ENCODE measurements at regions of chr2 and their contacts with region 1.

Region 1: GRCh38 chr2:181312515-181312927 is 144.7 kb upstream of the ITGA4 start:
- DNase-seq: peak; percentile 99
- ATAC-seq: peak; percentile 87
- H3K4me3 ChIP-seq: 0 out of 2 replicates have a peak overlapping the region, but pooled peaks have one; percentile 6
- H3K27ac ChIP-seq: peak overlapping the region; percentile 99
- H3K4me1 ChIP-seq: peaks cover 49% of the 10 kb centered on the region
- H3K27me3 ChIP-seq: no peaks in the 10 kb centered on the region
- CTCF ChIP-seq: no peak
- EP300 ChIP-seq: peak; percentile 69 to 90; a peak in 3 of 4 replicates
- POLR2A ChIP-seq: peak; percentile 58
- RAD21 ChIP-seq: peak; percentile 35

Region 2: GRCh38 chr2:181326661-181327060 is 14.1 kb after region 1 on chr2:
- CTCF ChIA-PET with region 1: interaction called, 3 read pairs
- POLR2A ChIA-PET with region 1: interaction called, 3 read pairs
- RAD21 ChIA-PET with region 1: interaction called, 3 read pairs
- SMC1A ChIA-PET with region 1: interaction called, 25 read pairs
- in situ Hi-C with region 1: no loop called
- intact Hi-C with region 1: no loop called
- DNase-seq: no peak
- ATAC-seq: no peak
- H3K4me3 ChIP-seq: no peak overlapping the region
- H3K27ac ChIP-seq: no peak overlapping the region
- H3K4me1 ChIP-seq: no peaks in the 10 kb centered on the region
- H3K27me3 ChIP-seq: no peaks in the 10 kb centered on the region
- CTCF ChIP-seq: no peak
- EP300 ChIP-seq: no peak
- POLR2A ChIP-seq: no peak
- RAD21 ChIP-seq: no peak

Region 3: GRCh38 chr2:181341855-181342600 is 29.5 kb after region 1 on chr2:
- CTCF ChIA-PET with region 1: interaction called, 4 read pairs
- POLR2A ChIA-PET with region 1: interaction called, 4 read pairs
- RAD21 ChIA-PET with region 1: interaction called, 4 read pairs
- SMC1A ChIA-PET with region 1: interaction called, 37 read pairs
- in situ Hi-C with region 1: no loop called
- intact Hi-C with region 1: no loop called
- DNase-seq: no peak
- ATAC-seq: no peak
- H3K4me3 ChIP-seq: no peak overlapping the region
- H3K27ac ChIP-seq: no peak overlapping the region
- H3K4me1 ChIP-seq: no peaks in the 10 kb centered on the region
- H3K27me3 ChIP-seq: no peaks in the 10 kb centered on the region
- CTCF ChIP-seq: no peak
- EP300 ChIP-seq: no peak
- POLR2A ChIP-seq: no peak
- RAD21 ChIP-seq: no peak

Region 4: GRCh38 chr2:181354626-181355025 is 42.1 kb after region 1 on chr2:
- CTCF ChIA-PET with region 1: interaction called, 10 read pairs
- POLR2A ChIA-PET with region 1: no interaction called
- RAD21 ChIA-PET with region 1: interaction called, 26 read pairs
- SMC1A ChIA-PET with region 1: interaction called, 15 read pairs
- in situ Hi-C with region 1: no loop called
- intact Hi-C with region 1: loop called (anchors 2 kb)
- DNase-seq: no peak
- ATAC-seq: peak; percentile 46; the same call in 2 of the 3 replicates
- H3K4me3 ChIP-seq: no peak overlapping the region
- H3K27ac ChIP-seq: no peak overlapping the region
- H3K4me1 ChIP-seq: peaks cover 5% of the 10 kb centered on the region
- H3K27me3 ChIP-seq: no peaks in the 10 kb centered on the region
- CTCF ChIP-seq: no peak
- EP300 ChIP-seq: no peak
- POLR2A ChIP-seq: no peak
- RAD21 ChIP-seq: no peak

Region 5: DNA sequence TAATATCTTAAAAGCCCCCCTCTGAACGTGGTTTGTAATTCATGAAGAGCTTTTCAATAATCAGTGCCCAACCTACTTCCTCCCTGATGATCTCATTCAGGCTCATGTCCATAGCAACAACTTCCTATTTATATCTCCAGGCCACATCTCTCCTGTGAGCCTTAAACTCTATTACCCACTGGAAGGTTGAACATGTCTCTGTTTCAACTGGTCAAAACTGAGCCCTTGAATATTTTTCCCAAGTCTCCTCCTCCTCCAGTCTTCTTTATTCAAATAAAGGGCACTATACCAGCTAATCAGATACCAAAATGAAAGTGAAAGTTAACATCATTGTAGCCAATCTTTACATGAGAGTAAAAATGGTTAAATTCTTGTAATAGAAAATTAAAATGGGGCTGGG is 81.0 kb after region 1 on chr2:
- CTCF ChIA-PET with region 1: interaction called, 8 read pairs
- POLR2A ChIA-PET with region 1: interaction called, 6 read pairs
- RAD21 ChIA-PET with region 1: interaction called, 11 read pairs
- SMC1A ChIA-PET with region 1: interaction called, 46 read pairs
- in situ Hi-C with region 1: no loop called
- intact Hi-C with region 1: loop called (anchors 5 kb)
- DNase-seq: no peak
- ATAC-seq: peak; percentile 77
- H3K4me3 ChIP-seq: no peak overlapping the region; the same call in 1 of the 2 replicates
- H3K27ac ChIP-seq: no peak overlapping the region
- H3K4me1 ChIP-seq: peaks cover 2% of the 10 kb centered on the region; the same call in 1 of the 2 replicates
- H3K27me3 ChIP-seq: no peaks in the 10 kb centered on the region
- CTCF ChIP-seq: no peak
- EP300 ChIP-seq: no peak
- POLR2A ChIP-seq: no peak
- RAD21 ChIP-seq: no peak

Region 6: GRCh38 chr2:181457121-181457740 is 144.7 kb after region 1 on chr2 and contains the start of gene ITGA4:
- CTCF ChIA-PET with region 1: interaction called, 235 read pairs
- POLR2A ChIA-PET with region 1: interaction called, 22 read pairs
- RAD21 ChIA-PET with region 1: interaction called, 340 read pairs
- SMC1A ChIA-PET with region 1: interaction called, 313 read pairs
- in situ Hi-C with region 1: loop called (anchors 5 kb)
- intact Hi-C with region 1: loop called (anchors 2 kb)
- DNase-seq: peak; percentile 56
- ATAC-seq: peak; percentile 90
- H3K4me3 ChIP-seq: peak within 1 kb of the TSS; percentile 88
- H3K27ac ChIP-seq: peak within 1 kb of the TSS; percentile 97
- H3K4me1 ChIP-seq: peaks cover 13% of the 10 kb centered on the region
- H3K27me3 ChIP-seq: no peaks in the 10 kb centered on the region
- CTCF ChIP-seq: peak; percentile 81 to 92 (median 81)
- EP300 ChIP-seq: no peak
- POLR2A ChIP-seq: peak; percentile 84
- RAD21 ChIP-seq: peak; percentile 93
- polyA plus RNA-seq, gene ITGA4: 12.4 to 16.2 TPM